Left cardiac atrium (tissue), 4 donors: ENCODE measurements at regions of chr7 and their contacts with region 1.

Region 1: DNA sequence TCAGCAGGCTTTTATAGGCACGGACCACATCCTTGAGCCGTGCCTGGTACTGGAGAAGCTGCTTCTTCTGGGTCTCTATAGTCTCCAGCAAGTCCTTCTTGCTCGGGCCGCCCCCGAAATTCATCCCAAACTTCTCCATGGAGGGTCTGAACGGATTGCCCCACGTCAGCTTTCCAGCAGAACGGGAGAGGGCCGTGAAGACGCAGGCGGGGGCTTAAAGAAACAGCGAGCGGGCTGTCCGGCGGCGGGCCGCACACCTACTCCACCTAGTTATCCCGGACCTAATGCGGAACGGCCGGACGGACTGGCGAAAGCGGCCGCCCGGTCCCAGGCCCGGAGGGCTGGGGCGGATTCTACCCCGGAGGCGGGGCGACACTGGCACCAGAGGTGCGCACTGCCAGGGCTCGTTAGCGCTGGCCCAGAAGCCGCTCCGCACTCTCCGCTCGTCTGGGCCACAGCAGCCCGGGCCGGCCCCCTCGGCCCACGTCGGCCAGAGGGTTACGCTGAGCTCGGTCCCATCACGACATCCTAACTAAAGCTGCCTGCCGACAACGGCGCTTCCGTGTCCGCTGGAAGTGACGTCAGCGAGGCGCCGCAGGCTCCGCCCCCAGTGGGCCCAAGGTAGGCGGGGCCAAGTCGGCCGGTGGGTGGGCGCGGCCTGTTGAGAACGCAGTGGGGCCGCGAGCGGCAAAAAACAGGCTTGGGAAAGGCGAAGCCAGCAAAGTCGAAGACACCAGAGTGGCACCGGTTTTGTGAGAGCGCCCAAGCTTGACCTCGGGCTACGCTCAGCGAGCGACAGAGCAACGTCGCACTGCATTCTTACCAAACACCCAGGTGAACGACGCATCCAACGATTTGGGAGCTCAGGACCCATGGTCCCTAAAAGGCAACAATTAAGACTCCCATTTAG is at the start of gene GCC1:
- DNase-seq: peak; percentile 95
- ATAC-seq: peak; percentile 83 to 86
- total RNA-seq, gene GCC1: 7.9 to 9.0 TPM

Region 2: GRCh38 chr7:127392566-127393367 is 192.5 kb before region 1 on chr7 and contains the start of gene ZNF800:
- intact Hi-C with region 1: loop called in 1 of 2 experiments (anchors 10 kb)
- DNase-seq: peak; percentile 93
- ATAC-seq: peak; percentile 98 to 99
- total RNA-seq, gene ZNF800: 22.2 to 26.0 TPM

Region 3: DNA sequence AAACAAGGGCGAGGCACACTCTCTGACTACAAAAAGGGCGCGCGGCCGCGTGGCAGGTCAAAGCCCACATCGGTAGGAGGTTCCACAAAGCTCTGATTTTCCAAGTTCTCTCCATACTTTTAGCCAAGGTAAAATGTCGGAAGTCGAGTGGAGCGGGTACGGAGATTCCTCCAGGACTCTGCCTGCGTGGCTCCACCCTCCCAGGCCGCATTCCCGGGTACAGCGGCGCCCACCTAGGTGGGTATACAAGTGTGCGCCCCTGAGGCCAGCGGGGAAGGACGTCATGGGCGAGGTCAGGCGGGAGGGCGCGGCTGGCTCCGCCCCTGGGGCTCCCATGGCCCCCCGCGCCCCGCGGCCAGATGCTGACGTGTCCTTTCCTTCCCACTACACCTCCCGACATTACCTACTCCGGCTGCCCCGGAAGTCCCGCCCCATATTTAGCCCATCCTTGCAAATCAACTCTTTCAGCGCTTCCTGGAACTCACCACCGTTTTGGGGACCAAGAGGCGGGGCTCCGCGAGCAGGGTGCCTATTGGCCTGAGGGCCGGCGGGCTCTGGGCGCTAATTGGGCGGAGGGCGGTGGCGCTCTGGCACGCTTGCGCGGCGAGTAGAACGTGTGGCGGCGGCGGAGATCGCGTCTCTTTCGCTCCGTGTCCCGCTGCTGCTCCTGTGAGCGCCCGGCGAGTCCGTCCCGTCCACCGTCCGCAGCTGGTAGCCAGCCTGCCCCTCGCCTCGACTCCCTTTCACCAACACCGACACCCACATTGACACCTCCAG is 66.4 kb after region 1 on chr7 and contains the start of gene SND1:
- intact Hi-C with region 1: loop called in 1 of 2 experiments (anchors 5 kb)
- DNase-seq: peak; percentile 100
- ATAC-seq: peak; percentile 98
- total RNA-seq, gene SND1: 91.8 to 111 TPM

Region 4: DNA sequence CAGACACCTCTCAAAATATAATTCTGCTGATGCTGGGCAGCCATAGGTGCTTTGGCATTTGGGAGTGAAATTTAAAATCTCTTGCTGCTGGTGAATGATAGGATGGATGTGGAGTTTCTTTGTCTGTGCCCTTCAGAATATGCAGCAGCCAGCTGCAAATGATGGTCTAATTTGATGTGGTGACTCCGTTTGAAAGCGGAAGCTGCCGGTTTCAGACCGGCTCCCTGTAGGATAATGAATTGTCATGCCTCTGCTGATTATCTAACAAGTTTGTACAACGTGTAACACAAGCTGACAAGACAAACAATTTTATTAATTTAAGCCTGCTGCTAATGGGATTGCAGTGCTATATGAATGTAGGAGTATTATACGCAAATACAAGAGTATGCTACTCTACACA is 170.2 kb after region 1 on chr7:
- intact Hi-C with region 1: no loop called
- DNase-seq: no peak
- ATAC-seq: no peak

Region 5: DNA sequence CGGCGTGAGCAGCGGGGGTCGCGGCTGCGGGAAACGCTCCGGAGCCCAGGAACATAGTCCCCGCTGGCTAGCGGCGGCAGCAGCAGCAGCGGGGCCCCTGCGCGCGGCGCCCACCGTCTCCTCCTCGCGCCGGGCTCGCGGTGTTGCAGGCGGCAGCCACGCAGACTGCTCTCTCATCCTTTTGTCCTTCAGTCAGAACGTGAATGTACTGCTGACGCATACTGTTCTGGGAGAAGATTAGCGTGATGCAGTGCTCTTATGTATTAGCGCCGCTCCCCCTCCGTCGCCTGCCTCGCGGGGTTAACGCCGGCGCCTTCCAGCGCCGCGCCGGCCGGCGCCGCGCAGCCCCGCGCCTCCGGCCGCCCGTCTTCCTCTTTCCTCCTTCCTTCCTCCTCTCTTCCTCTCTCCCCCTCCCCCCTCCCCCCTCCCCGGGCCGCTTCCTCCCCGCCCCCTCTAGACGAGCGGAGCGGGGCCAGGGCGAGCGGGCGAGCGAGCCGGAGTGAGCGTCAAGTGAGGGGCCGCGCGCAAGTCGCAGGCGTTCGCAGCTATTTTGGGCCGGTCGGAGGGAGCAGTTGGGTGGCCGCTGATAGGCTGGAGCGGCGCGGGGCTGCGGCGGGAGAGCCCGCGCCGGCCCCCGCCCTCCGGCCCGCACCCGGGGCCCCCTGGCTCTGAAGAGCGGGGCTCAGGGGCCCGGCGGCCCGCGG is 446.8 kb after region 1 on chr7:
- intact Hi-C with region 1: loop called in 1 of 2 experiments (anchors 10 kb)
- DNase-seq: peak; percentile 58
- ATAC-seq: peak; percentile 68 to 84